ENCODE measurements at regions of chr1 and their contacts with region 1.

Region 1: DNA sequence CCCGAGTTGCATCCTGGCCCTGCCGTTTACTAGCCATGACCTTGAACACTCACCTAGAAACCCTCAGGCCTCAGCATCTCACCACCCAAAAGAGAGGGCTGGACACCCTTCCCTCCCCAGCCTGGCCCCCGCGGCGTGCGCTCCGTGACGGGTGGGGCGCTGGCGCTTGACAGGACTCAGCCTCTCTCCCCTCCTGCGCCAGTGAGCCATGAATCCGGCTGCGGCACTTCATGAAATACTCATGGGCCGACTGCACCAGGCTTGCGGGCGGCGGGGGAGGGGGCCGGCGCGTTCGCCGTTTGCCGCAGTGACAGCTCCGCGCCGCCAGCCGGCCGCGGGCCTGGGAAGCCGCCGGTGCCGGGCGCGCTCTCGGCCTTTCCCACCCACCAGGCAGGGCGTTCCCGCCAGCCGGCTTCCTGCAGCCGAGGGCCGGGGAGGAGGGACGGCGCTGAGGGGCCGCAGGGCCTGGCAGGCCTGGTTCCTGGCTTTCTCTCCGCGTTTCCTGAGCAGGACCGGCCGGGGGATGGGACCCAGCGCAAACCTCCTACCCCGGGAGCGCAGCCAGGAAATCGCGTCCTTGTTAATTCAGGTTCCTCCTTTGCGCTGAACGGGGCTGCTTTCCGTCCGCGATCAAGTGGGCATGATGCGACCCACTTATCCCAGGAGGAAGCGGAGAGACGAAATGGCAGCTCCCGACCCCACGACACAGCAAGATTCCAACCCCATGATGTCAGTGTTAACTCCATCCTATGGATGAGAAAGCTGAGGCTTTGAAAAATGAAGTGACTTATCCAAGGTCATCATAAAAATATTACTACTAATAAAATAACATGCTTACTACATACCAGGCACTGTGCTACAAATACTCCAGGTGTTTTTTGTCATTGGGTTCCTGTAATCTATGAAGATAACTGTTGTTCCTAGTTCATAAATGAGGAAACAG is 9.1 kb upstream of the LUZP1 start:
- DNase-seq: peak; percentile 46
- ATAC-seq: peak; percentile 94
- H3K4me3 ChIP-seq: peak overlapping the region; percentile 62
- H3K27ac ChIP-seq: peak overlapping the region; percentile 47
- H3K4me1 ChIP-seq: peaks cover 19% of the 10 kb centered on the region
- H3K27me3 ChIP-seq: no peaks in the 10 kb centered on the region
- CTCF ChIP-seq: 0 out of 6 replicates have a peak, but pooled peaks of 1 of the 3 experiments have one; percentile 1
- EP300 ChIP-seq: peak in 1 of 2 experiments; percentile 30; a peak in 1 of 4 replicates
- POLR2A ChIP-seq: peak; percentile 50
- RAD21 ChIP-seq: no peak

Region 2: DNA sequence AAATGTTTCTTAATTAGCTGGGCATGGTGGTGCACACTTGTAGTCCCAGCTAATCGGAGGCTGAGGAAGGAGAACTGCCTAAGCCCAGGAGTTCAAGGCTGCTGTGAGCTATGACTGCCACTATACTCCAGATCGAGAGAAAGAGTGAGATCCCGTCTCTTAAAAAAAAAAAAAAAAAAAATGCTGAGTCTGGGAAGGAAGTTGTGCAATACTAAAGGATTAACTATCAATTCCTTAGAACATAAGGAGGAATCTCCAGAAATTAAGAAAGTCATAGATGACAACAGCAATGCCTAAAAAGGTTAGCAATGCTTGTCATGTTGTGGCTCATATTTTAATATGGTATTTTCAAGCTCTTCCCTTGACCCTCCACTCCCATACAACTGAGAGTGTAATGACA is 14.3 kb before region 1 on chr1:
- CTCF ChIA-PET with region 1: interaction called, 14 read pairs
- POLR2A ChIA-PET with region 1: interaction called, 3 read pairs
- RAD21 ChIA-PET with region 1: interaction called, 4 read pairs
- SMC1A ChIA-PET with region 1: interaction called, 14 read pairs
- in situ Hi-C with region 1: no loop called
- intact Hi-C with region 1: no loop called
- DNase-seq: no peak
- ATAC-seq: no peak
- H3K4me3 ChIP-seq: no peak overlapping the region
- H3K27ac ChIP-seq: no peak overlapping the region
- H3K4me1 ChIP-seq: no peaks in the 10 kb centered on the region
- H3K27me3 ChIP-seq: no peaks in the 10 kb centered on the region
- CTCF ChIP-seq: no peak
- EP300 ChIP-seq: no peak
- POLR2A ChIP-seq: no peak
- RAD21 ChIP-seq: no peak